Aorta (tissue), 5 donors: ENCODE measurements at regions of chr17 and their contacts with region 1.

Region 1: GRCh38 chr17:76887802-76888201 is 19.6 kb downstream of the MGAT5B start:
- DNase-seq: no peak
- ATAC-seq: no peak
- H3K4me3 ChIP-seq: no peak overlapping the region
- H3K27ac ChIP-seq: no peak overlapping the region
- H3K4me1 ChIP-seq: no peaks in the 10 kb centered on the region
- H3K27me3 ChIP-seq: no peaks in the 10 kb centered on the region

Region 2: DNA sequence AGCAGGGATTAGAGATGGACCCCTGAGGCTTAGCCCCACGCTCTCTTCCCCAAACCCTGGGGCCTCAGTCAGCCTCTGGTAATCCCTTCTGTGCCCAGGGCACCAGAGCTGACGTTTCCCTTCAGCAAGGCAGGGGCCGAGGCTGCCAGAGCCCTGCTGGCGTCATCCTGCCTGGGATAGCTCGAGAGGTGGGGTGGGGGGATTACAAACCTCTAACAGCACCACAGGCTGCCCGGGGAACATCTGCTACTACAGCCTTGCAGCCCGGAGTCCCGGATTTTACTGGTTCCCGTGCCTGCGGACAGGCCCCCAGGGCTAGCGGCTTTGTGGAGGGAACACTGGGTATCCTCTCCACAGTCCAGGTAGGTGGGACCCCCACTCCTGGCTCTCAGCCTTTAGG is 420.4 kb before region 1 on chr17 and contains the start of gene AANAT:
- intact Hi-C with region 1: no loop called
- DNase-seq: no peak
- ATAC-seq: no peak
- H3K4me3 ChIP-seq: no peak within 1 kb of the TSS
- H3K27ac ChIP-seq: no peak within 1 kb of the TSS
- H3K4me1 ChIP-seq: no peaks in the 10 kb centered on the region
- H3K27me3 ChIP-seq: no peaks in the 10 kb centered on the region
- total RNA-seq, gene AANAT: not detected

Region 3: GRCh38 chr17:76957678-76958464 is 70.1 kb after region 1 on chr17:
- intact Hi-C with region 1: loop called in 1 of 2 experiments (anchors 10 kb)
- DNase-seq: peak in 1 of 2 donors; percentile 61
- ATAC-seq: no peak
- H3K4me3 ChIP-seq: no peak overlapping the region
- H3K27ac ChIP-seq: no peak overlapping the region
- H3K4me1 ChIP-seq: no peaks in the 10 kb centered on the region
- H3K27me3 ChIP-seq: no peaks in the 10 kb centered on the region